ENCODE measurements at regions of chr14 and their contacts with region 1.

Region 1: GRCh38 chr14:90060312-90060964 is 1.4 kb upstream of the KCNK13 start:
- DNase-seq: peak; percentile 32
- H3K4me3 ChIP-seq: peak overlapping the region in 3 of 4 donors; percentile 15 to 50 (median 40)
- H3K27ac ChIP-seq: no peak overlapping the region
- H3K4me1 ChIP-seq: peaks cover 10 to 31% (median 30%) of the 10 kb centered on the region in 4 donors
- H3K27me3 ChIP-seq: peaks cover 98% of the 10 kb centered on the region
- CTCF ChIP-seq: peak in 2 of 5 experiments; percentile 18 to 27
- EP300 ChIP-seq: no peak
- POLR2A ChIP-seq: no peak

Region 2: DNA sequence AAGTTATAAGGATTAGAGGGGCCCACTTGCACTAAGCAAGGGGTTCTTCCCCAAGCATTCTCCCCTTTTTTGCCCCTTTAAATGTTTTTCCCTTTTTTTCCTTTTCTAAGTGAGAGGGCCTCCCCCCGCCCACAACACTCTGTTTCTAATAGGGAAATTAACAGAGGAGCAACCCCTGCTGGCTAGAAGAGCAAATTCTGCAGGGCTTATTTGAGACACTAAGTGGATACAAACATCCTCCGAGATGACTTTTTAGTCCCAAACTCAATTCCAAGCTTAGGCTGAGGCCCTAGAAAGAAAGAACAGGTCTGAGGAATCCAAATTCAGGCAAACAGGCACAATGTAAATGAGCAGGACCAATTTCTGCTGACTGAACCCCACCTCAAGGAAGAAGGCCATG is 1916.6 kb before region 1 on chr14:
- in situ Hi-C with region 1: no loop called
- intact Hi-C with region 1: no loop called
- DNase-seq: no peak
- H3K4me3 ChIP-seq: no peak overlapping the region
- H3K27ac ChIP-seq: no peak overlapping the region
- H3K4me1 ChIP-seq: no peaks in the 10 kb centered on the region
- H3K27me3 ChIP-seq: no peaks in the 10 kb centered on the region
- CTCF ChIP-seq: no peak
- EP300 ChIP-seq: no peak
- POLR2A ChIP-seq: no peak

Region 3: DNA sequence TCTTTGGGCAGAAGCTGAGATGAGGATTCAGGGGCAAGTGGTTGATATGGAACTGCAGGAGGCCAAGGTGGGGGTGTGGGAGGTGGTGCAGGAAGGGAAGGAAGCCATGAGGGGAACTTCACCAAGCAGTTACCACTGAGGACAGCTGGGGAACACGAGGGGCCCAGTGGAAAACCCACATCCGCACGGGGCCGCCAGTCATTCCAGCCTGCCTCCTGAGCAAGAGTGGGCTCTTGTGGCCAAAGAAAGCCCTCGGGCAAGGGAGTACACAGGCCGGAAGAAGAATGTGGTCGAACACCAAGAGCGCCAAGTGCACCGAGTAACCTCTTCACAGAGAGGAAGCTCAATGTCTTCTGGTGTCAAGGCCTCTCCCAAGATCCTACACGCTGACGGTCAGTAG is 391.2 kb before region 1 on chr14:
- in situ Hi-C with region 1: no loop called
- intact Hi-C with region 1: loop called (anchors 5 kb)
- DNase-seq: peak; percentile 34
- H3K4me3 ChIP-seq: no peak overlapping the region
- H3K27ac ChIP-seq: no peak overlapping the region
- H3K4me1 ChIP-seq: peaks cover 0 to 12% (median 4%) of the 10 kb centered on the region in 4 donors
- H3K27me3 ChIP-seq: no peaks in the 10 kb centered on the region
- CTCF ChIP-seq: no peak
- EP300 ChIP-seq: no peak
- POLR2A ChIP-seq: no peak

Region 4: DNA sequence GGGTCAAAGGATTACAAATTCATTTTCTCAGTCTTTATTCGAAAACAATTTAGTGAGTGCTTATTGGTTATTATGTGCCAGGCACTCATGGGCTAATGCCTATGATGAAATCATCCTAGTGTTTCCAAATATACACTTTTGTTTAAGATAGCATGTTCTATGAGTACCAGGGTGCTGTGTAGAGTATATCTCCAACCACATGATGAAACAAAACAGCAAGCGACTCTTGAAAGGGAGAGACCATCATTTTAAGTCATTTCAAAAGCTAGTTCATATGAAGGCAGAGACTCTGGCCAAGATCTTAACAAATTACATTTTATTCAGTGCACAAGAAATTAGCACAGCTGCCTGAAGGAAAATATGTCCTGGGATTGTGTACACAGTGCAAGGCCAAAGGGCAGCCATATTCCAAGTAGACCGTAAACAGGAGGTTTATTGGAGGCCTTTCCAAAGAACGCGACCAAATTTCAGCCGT is 310.1 kb before region 1 on chr14:
- in situ Hi-C with region 1: no loop called
- intact Hi-C with region 1: no loop called
- DNase-seq: no peak
- H3K4me3 ChIP-seq: no peak overlapping the region
- H3K27ac ChIP-seq: no peak overlapping the region
- H3K4me1 ChIP-seq: peaks cover 0 to 10% (median 3%) of the 10 kb centered on the region in 4 donors
- H3K27me3 ChIP-seq: no peaks in the 10 kb centered on the region
- CTCF ChIP-seq: no peak
- EP300 ChIP-seq: no peak
- POLR2A ChIP-seq: no peak

Region 5: DNA sequence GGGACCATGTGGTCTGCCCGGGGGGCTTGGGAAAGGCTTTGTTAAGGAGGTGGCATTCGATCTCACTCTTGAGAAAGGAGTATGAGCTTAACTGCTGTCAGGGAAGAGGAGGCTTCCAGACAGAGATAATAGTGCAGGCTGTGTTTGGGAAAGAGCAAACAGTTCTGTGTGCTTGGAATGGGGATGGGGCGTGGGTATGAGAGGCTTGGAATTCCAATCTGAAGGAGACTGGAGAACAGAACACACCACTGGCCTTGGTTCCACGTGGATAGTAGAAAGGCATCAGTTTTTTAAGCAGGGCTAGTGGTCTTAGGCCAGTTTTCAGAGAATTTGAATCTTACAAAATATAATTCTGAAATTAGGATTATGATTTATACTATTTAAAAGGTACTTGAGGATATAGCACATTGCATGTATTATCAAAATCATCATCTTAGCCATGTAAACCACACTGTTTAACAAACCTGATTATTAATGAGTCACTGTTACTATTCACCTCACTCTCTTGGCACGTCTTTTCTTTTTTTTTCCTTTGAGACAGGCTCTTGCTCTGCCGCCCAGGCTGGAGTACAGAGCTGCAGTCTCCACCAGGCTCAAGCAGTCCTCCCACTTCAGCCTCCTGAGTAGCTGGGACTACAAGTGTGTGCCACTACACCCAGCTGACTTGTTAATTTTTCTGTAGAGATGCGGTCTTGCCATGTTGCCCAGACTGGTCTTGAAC is 37.1 kb before region 1 on chr14:
- in situ Hi-C with region 1: no loop called
- intact Hi-C with region 1: no loop called
- DNase-seq: no peak
- H3K4me3 ChIP-seq: no peak overlapping the region
- H3K27ac ChIP-seq: no peak overlapping the region
- H3K4me1 ChIP-seq: no peaks in the 10 kb centered on the region
- H3K27me3 ChIP-seq: no peaks in the 10 kb centered on the region
- CTCF ChIP-seq: no peak
- EP300 ChIP-seq: no peak
- POLR2A ChIP-seq: no peak

Region 6: GRCh38 chr14:90228478-90228877 is 168.0 kb after region 1 on chr14:
- in situ Hi-C with region 1: no loop called
- intact Hi-C with region 1: no loop called
- DNase-seq: no peak
- H3K4me3 ChIP-seq: no peak overlapping the region
- H3K27ac ChIP-seq: no peak overlapping the region
- H3K4me1 ChIP-seq: no peaks in the 10 kb centered on the region
- H3K27me3 ChIP-seq: no peaks in the 10 kb centered on the region
- CTCF ChIP-seq: no peak
- EP300 ChIP-seq: no peak
- POLR2A ChIP-seq: no peak